Posterior vena cava (tissue), 2 donors: ENCODE measurements at regions of chr5 and their contacts with region 1.

Region 1: DNA sequence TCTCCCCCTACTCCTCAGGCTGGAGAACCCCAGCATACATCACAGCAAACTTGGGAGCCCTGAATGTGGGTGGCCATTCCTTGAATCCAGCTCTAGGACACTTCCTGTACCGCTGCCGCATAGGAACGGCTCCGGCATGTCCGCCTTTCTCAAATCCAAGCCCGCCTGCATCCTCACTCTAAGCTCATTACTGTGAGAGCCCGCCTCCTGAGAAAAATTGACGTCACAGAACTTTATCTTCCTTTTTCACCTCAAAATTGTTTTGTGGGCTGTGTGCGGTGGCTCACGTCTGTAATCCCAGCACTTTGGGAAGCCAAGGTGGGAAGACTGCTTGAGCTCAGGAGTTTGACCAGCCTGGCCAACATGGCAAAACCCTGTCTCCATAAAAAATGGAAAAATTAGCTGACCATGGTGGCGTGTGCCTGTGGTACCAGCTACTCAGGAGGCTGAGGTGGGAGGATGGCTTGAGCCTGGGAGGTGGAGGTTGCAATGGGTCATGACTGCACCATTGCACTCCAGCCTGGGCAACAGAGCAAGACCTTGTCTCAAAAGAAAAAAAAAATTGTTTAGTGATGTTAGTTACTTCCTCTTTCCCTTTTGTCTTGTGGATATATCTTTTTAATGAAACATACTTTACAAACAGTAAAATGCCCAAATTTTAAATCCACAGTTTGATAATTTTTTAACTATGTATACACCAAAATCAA is 22.8 kb downstream of the RNF44 start:
- DNase-seq: no peak

Region 2: GRCh38 chr5:175861337-175862130 is 652.9 kb before region 1 on chr5:
- intact Hi-C with region 1: loop called in 1 of 2 experiments (anchors 5 kb)
- DNase-seq: no peak

Region 3: DNA sequence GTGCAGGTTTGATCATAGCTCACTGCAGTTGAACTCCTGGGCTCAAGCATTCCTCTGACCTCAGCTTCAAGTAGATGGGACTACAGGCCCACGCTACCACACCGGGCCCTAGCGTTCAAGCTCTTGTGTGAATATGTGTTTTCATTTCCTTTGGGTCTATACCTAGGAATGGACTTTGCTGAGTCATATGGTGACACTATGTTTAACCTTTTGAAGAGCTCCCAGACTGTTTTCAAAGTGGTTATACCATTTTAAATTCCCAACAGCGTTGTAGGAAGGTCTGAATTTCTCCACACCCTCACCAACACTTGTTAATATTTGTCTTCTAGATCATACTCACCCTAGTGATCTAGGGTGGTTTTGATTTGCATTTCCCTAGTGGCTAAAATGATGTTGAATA is 32.7 kb before region 1 on chr5:
- intact Hi-C with region 1: no loop called
- DNase-seq: no peak

Region 4: GRCh38 chr5:177516604-177517568 is 1002.5 kb after region 1 on chr5 and contains the start of gene DDX41:
- intact Hi-C with region 1: no loop called
- DNase-seq: peak; percentile 99
- total RNA-seq, gene DDX41: 52.1 to 52.6 TPM